Activated naive CD8-positive, alpha-beta T cell treated with anti-CD3 and anti-CD28 coated beads, Interleukin-2, amount 10 ng/mL, durations not matched to agents 7 days and 5 days (primary cell): ENCODE measurements at regions of chr3 and their contacts with region 1.

Region 1: GRCh38 chr3:51967384-51968169 is at the start of gene PCBP4:
- DNase-seq: peak; percentile 67
- ATAC-seq: peak; percentile 66
- H3K4me3 Mint-ChIP-seq: peak within 1 kb of the TSS; percentile 86
- H3K27ac Mint-ChIP-seq: peak within 1 kb of the TSS; percentile 67
- H3K4me1 Mint-ChIP-seq: peaks cover 9% of the 10 kb centered on the region
- H3K27me3 Mint-ChIP-seq: peaks cover 4% of the 10 kb centered on the region
- total RNA-seq, gene PCBP4: 17.8 to 18.2 TPM

Region 2: DNA sequence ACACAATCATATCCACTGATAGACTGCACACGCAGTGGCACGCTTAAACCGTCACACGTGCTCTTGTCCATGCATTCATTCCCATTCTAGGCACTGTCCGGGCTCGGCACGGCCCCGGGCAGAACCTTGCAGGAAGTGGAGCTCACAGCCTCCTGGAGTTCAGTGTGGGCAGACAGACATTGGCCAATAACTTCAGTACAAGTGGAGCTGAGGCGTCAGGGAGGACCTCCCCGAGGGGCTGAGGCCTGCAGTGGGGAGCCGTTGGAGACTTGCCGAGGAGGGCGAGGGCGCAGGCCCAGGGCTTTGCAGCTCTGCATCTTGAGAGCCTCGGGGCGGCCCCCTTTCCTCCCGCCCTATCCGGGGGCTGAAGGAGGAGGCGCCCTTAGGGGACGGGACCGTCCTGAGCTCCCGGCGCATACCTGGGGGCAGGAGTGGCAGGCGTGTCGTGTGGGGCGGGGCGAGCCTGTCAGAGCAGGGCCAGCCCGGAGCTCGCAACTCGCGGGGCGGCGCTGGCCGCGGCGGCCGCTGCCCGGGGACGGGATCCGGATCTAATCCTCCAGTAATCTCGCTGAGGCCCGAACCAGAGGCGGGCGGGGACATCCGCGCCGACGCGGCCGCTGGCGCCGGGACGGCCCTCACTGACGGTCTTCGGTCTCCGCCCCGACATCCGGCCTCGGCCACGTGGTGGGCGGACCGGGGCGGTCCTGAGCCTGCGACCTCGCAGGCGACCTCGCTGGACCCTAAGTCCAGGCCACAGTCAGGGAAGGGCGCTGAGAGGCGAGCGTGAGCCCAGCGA is 15.4 kb after region 1 on chr3 and contains the start of gene ACY1:
- POLR2A ChIA-PET with region 1: interaction called, 15 read pairs
- DNase-seq: peak; percentile 84
- ATAC-seq: peak; percentile 80
- H3K4me3 Mint-ChIP-seq: peak within 1 kb of the TSS; percentile 94
- H3K27ac Mint-ChIP-seq: peak within 1 kb of the TSS; percentile 87
- H3K4me1 Mint-ChIP-seq: peaks cover 15% of the 10 kb centered on the region
- H3K27me3 Mint-ChIP-seq: no peaks in the 10 kb centered on the region
- total RNA-seq, gene ACY1: 15.8 to 17.1 TPM